CD4-positive, alpha-beta T cell (primary cell): ENCODE measurements at regions of chr2 and their contacts with region 1.

Region 1: DNA sequence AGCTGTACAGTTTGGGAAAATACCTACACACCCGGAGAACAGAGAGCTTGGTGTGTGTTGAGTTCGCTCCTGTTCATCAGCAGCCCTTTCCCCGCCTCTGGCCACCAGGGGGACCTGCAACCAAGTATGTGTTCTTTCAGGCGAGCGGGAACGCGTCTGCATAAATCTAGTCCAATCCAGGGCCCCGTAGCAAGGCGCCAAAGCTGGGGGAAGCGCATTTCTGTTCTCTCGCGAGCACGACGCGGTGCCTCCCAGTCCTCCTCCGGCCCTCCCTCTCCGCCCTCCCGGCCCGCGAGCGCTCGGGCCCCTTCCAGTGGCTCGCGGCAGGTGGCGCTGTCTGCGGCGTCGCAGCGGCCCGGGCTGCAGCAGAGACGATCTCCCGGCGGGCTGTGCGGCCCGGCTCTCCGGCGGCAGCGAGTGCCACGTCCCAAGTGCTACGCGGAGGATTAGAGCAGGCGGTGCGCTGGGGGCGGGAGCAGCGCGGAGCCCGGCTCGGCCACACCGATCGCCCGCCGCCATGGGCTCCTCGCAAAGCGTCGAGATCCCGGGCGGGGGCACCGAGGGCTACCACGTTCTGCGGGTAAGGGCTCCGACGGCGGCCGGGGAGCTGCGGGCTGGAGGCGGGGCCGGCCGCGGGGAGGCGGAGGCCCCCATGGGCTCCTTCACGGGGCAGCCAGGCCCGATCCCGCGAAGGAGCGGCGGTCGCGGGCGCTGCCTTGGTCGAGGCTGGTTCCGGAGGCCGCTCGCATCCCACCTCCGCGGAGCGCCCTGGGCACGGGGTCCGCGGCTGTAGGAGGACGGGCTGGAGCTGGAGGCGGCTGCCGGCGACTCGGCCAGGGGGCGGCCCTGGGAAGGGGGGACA is at the start of gene GORASP2:
- DNase-seq: peak; percentile 94 to 100 (median 97)
- ATAC-seq: peak; percentile 90
- H3K4me3 ChIP-seq: peak within 1 kb of the TSS; percentile 91
- H3K4me3 Mint-ChIP-seq: peak within 1 kb of the TSS; percentile 97
- H3K27ac ChIP-seq: peak within 1 kb of the TSS; percentile 80 to 86
- H3K27ac Mint-ChIP-seq: peak within 1 kb of the TSS; percentile 94
- H3K4me1 ChIP-seq: peaks cover 12% of the 10 kb centered on the region
- H3K4me1 Mint-ChIP-seq: peaks cover 49% of the 10 kb centered on the region
- H3K27me3 ChIP-seq: no peaks in the 10 kb centered on the region
- H3K27me3 Mint-ChIP-seq: no peaks in the 10 kb centered on the region
- CTCF ChIP-seq: peak; percentile 97
- total RNA-seq, gene GORASP2: 87.3 to 95.7 TPM

Region 2: DNA sequence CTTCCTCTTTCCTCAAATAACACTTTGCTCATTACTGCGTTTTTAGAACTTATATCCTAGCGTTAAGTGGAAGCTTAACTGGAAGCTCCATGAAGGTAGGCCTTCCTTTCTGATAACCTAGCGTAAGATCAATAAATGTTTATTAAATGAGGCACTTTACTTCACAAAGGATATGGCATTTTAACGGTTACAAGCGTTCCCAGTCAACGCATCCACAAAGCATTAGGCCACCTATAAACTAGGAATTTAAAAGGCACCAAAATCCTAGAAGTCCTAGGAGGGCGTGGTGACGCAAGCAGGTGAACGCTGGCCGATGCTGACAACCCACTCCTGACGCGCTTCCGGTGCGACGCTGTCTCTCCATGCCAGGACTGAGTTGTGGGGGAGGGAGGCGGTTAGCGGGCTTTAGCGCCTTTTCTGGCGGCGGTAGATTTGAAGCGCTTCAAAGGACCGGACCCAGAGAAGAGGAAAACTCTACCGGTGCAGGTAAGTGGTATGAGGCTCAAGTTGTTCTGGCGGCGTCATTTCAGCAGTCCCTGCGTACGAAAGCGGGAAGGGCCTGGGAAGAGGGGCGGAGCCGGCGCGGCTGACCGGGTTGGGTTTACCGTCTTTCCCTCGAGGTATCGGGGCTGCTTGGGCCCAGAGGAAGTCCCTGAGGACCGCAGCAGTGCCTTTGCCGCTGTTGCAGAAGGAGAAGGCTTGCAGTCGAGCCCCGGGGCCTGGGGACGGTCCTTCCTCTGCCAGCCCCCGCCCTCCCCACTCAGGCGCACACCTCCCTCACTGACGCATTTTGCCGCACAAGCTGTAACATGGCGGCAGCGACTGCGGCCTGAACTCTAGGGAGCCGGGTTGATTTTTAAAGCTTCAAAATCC is 1344.8 kb before region 1 on chr2 and contains the start of gene PPIG:
- CTCF ChIA-PET with region 1: no interaction called
- POLR2A ChIA-PET with region 1: interaction called, 3 read pairs
- intact Hi-C with region 1: loop called in 1 of 2 experiments (anchors 10 kb)
- DNase-seq: peak; percentile 73 to 96 (median 82)
- ATAC-seq: peak; percentile 92
- H3K4me3 ChIP-seq: peak within 1 kb of the TSS; percentile 81
- H3K4me3 Mint-ChIP-seq: peak within 1 kb of the TSS; percentile 98
- H3K27ac ChIP-seq: peak within 1 kb of the TSS; percentile 97 to 99
- H3K27ac Mint-ChIP-seq: peak within 1 kb of the TSS; percentile 99
- H3K4me1 ChIP-seq: peaks cover 24% of the 10 kb centered on the region
- H3K4me1 Mint-ChIP-seq: peaks cover 39% of the 10 kb centered on the region
- H3K27me3 ChIP-seq: no peaks in the 10 kb centered on the region
- H3K27me3 Mint-ChIP-seq: no peaks in the 10 kb centered on the region
- CTCF ChIP-seq: no peak
- total RNA-seq, gene PPIG: 83.4 to 87.8 TPM

Region 3: GRCh38 chr2:170715062-170715931 is 213.8 kb before region 1 on chr2 and contains the start of gene SP5:
- CTCF ChIA-PET with region 1: no interaction called
- POLR2A ChIA-PET with region 1: no interaction called
- intact Hi-C with region 1: no loop called
- DNase-seq: peak in 6 of 14 experiments; percentile 18 to 68 (median 52)
- ATAC-seq: peak; percentile 54
- H3K4me3 ChIP-seq: peak within 1 kb of the TSS; percentile 59
- H3K4me3 Mint-ChIP-seq: peak within 1 kb of the TSS; percentile 83
- H3K27ac ChIP-seq: no peak within 1 kb of the TSS
- H3K27ac Mint-ChIP-seq: no peak within 1 kb of the TSS
- H3K4me1 ChIP-seq: peaks cover 65% of the 10 kb centered on the region
- H3K4me1 Mint-ChIP-seq: peaks cover 51% of the 10 kb centered on the region
- H3K27me3 ChIP-seq: peaks cover 62 to 92% of the 10 kb centered on the region in 2 experiments
- H3K27me3 Mint-ChIP-seq: peaks cover 79% of the 10 kb centered on the region
- CTCF ChIP-seq: no peak
- total RNA-seq, gene SP5: not detected

Region 4: DNA sequence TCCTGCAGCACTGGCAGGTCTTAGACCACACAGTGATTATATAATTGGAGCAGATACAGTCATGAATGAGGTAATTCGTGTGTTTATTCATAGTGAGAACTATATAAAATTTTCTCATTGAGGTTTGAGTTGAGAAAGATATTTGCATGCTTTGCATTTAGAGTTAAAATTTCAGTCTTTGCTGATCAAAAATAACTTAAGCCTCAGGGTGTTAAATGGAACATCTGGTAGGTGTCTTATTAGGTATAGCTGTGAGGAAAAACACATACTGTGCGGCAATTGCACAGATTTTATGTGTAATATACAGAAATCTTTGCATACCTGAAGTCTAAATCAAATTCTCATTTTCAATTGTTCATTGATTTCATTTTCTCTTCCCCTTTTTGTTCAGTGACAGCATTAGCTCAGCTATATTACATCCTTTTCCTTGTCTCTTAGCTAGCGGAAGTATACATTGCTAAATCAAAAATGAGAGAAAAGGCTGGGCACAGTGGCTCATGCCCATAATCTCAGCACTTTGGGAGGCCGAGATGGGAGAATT is 21.2 kb after region 1 on chr2:
- CTCF ChIA-PET with region 1: interaction called, 30 read pairs
- POLR2A ChIA-PET with region 1: interaction called, 10 read pairs
- intact Hi-C with region 1: no loop called
- DNase-seq: no peak
- ATAC-seq: no peak
- H3K4me3 ChIP-seq: no peak overlapping the region
- H3K4me3 Mint-ChIP-seq: no peak overlapping the region
- H3K27ac ChIP-seq: no peak overlapping the region
- H3K27ac Mint-ChIP-seq: peak overlapping the region; percentile 48
- H3K4me1 ChIP-seq: peaks cover 4% of the 10 kb centered on the region
- H3K4me1 Mint-ChIP-seq: peaks cover 15% of the 10 kb centered on the region
- H3K27me3 ChIP-seq: no peaks in the 10 kb centered on the region
- H3K27me3 Mint-ChIP-seq: no peaks in the 10 kb centered on the region
- CTCF ChIP-seq: no peak

Region 5: DNA sequence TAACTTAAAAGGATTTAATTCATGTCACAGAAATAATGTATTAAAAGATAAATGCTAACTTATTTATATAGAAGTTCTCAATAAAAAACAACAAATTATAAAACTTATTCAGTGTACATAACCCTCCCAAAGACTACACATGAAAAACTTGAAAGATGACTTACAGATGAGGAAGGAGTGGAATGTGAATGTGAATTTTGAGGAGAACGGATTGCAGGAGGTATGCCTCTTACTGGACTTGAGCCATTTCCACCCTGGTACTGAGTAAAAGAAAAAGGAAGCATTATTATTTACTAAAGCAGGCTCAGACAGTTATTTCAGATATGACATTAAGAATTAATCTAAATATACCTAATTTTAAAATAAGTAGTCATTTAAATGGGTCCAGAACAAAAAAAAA is 127.3 kb after region 1 on chr2:
- CTCF ChIA-PET with region 1: no interaction called
- POLR2A ChIA-PET with region 1: no interaction called
- intact Hi-C with region 1: no loop called
- DNase-seq: no peak
- ATAC-seq: no peak
- H3K4me3 ChIP-seq: no peak overlapping the region
- H3K4me3 Mint-ChIP-seq: no peak overlapping the region
- H3K27ac ChIP-seq: no peak overlapping the region
- H3K27ac Mint-ChIP-seq: no peak overlapping the region
- H3K4me1 ChIP-seq: no peaks in the 10 kb centered on the region
- H3K4me1 Mint-ChIP-seq: peaks cover 15% of the 10 kb centered on the region
- H3K27me3 ChIP-seq: no peaks in the 10 kb centered on the region
- H3K27me3 Mint-ChIP-seq: no peaks in the 10 kb centered on the region
- CTCF ChIP-seq: no peak

Region 6: GRCh38 chr2:171086352-171087290 is 157.6 kb after region 1 on chr2:
- CTCF ChIA-PET with region 1: interaction called, 11 read pairs
- POLR2A ChIA-PET with region 1: interaction called, 5 read pairs
- intact Hi-C with region 1: no loop called
- DNase-seq: peak; percentile 20 to 82 (median 56)
- ATAC-seq: peak; percentile 64
- H3K4me3 ChIP-seq: peak overlapping the region; percentile 44
- H3K4me3 Mint-ChIP-seq: peak overlapping the region; percentile 84
- H3K27ac ChIP-seq: peak overlapping the region; percentile 31 to 64
- H3K27ac Mint-ChIP-seq: peak overlapping the region; percentile 88
- H3K4me1 ChIP-seq: peaks cover 19% of the 10 kb centered on the region
- H3K4me1 Mint-ChIP-seq: peaks cover 81% of the 10 kb centered on the region
- H3K27me3 ChIP-seq: no peaks in the 10 kb centered on the region
- H3K27me3 Mint-ChIP-seq: no peaks in the 10 kb centered on the region
- CTCF ChIP-seq: peak; percentile 83

Region 7: DNA sequence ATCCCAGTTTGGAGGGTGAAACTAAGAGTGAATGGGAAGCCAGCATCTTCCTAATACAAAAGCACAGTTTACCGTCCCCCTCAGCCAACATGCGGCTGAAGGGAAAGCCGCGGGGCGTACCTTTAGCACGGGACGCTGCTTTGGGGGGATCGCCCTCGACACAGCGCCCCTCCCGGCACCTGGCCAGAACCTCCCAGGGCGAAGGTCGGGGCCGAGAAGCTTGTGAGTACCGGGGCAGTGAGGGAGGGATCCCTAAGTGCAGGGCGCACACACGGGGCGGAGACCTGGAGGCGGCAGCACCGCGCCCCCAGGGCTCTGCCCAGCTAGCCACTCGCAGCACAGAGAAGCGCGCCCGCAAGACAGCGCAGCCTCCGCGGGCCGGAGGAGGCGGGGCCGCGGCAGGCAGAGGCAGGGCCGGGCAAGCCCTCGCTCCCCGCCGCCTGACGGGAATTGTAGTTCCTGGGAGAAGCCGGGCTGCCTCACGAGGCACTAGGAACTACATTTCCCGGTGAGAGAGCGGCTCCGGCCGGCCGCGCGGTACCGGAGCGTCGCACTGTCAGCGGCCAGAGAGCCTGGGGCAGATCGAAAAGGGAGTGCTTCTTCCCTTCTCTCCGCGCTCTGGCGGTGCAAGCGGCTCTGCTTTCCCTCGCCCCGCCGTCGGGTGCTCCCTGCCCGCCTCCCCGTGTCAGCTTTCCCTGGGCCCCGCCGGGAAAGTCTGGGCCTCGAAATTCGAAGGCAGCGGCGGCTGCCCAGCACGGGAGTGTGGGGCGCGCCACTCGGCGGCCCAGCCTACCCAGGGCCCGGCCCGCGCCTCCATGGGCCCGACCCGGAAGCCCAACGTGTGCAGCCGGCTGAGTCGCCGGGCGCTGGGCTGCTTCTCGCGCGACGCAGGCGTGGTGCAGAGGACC is 505.0 kb after region 1 on chr2 and contains the starts of genes DCAF17 and METTL8:
- CTCF ChIA-PET with region 1: interaction called, 43 read pairs
- POLR2A ChIA-PET with region 1: interaction called, 36 read pairs
- intact Hi-C with region 1: loop called (anchors 2 kb)
- DNase-seq: peak; percentile 84 to 97 (median 92)
- ATAC-seq: peak; percentile 91
- H3K4me3 ChIP-seq: peak within 1 kb of the TSS; percentile 65
- H3K4me3 Mint-ChIP-seq: peak within 1 kb of the TSS; percentile 94
- H3K27ac ChIP-seq: peak within 1 kb of the TSS; percentile 93 to 96
- H3K27ac Mint-ChIP-seq: peak within 1 kb of the TSS; percentile 88
- H3K4me1 ChIP-seq: peaks cover 10% of the 10 kb centered on the region
- H3K4me1 Mint-ChIP-seq: peaks cover 62% of the 10 kb centered on the region
- H3K27me3 ChIP-seq: no peaks in the 10 kb centered on the region
- H3K27me3 Mint-ChIP-seq: no peaks in the 10 kb centered on the region
- CTCF ChIP-seq: peak; percentile 59
- total RNA-seq, gene DCAF17: 13.0 to 14.3 TPM
- total RNA-seq, gene METTL8: 9.7 to 11.5 TPM

Region 8: DNA sequence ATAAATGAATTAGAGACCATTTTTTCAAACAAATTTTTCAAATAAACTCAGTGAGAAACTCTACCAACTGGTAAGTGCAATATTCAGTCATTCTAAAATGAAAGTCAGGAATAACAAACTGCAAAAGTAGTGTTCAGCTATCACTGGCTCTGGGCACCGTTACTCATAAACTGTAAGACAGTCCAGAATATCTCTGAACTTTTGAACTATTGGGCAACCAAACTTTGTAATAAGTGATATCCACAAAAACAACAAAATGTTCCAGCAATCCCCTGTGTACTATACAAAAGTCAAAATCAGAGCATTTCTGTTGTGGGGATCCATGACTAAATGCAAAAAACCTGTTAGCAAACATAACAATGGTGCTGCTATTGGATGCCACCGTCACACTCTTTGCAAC is 908.7 kb after region 1 on chr2:
- CTCF ChIA-PET with region 1: no interaction called
- POLR2A ChIA-PET with region 1: no interaction called
- intact Hi-C with region 1: no loop called
- DNase-seq: no peak
- ATAC-seq: no peak
- H3K4me3 ChIP-seq: no peak overlapping the region
- H3K4me3 Mint-ChIP-seq: no peak overlapping the region
- H3K27ac ChIP-seq: no peak overlapping the region
- H3K27ac Mint-ChIP-seq: no peak overlapping the region
- H3K4me1 ChIP-seq: no peaks in the 10 kb centered on the region
- H3K4me1 Mint-ChIP-seq: no peaks in the 10 kb centered on the region
- H3K27me3 ChIP-seq: no peaks in the 10 kb centered on the region
- H3K27me3 Mint-ChIP-seq: no peaks in the 10 kb centered on the region
- CTCF ChIP-seq: no peak

Region 9: GRCh38 chr2:172555522-172556283 is 1626.6 kb after region 1 on chr2 and contains the start of gene PDK1:
- CTCF ChIA-PET with region 1: interaction called, 3 read pairs
- POLR2A ChIA-PET with region 1: interaction called, 3 read pairs
- intact Hi-C with region 1: loop called in 1 of 2 experiments (anchors 10 kb)
- DNase-seq: peak; percentile 81 to 97 (median 90)
- ATAC-seq: peak; percentile 92
- H3K4me3 ChIP-seq: peak within 1 kb of the TSS; percentile 71
- H3K4me3 Mint-ChIP-seq: peak within 1 kb of the TSS; percentile 97
- H3K27ac ChIP-seq: peak within 1 kb of the TSS; percentile 47 to 86
- H3K27ac Mint-ChIP-seq: peak within 1 kb of the TSS; percentile 92
- H3K4me1 ChIP-seq: peaks cover 21% of the 10 kb centered on the region
- H3K4me1 Mint-ChIP-seq: peaks cover 61% of the 10 kb centered on the region
- H3K27me3 ChIP-seq: no peaks in the 10 kb centered on the region
- H3K27me3 Mint-ChIP-seq: no peaks in the 10 kb centered on the region
- CTCF ChIP-seq: no peak
- total RNA-seq, gene PDK1: 30.0 to 31.1 TPM